ENCODE measurements at regions of chr15 and their contacts with region 1.

Region 1: DNA sequence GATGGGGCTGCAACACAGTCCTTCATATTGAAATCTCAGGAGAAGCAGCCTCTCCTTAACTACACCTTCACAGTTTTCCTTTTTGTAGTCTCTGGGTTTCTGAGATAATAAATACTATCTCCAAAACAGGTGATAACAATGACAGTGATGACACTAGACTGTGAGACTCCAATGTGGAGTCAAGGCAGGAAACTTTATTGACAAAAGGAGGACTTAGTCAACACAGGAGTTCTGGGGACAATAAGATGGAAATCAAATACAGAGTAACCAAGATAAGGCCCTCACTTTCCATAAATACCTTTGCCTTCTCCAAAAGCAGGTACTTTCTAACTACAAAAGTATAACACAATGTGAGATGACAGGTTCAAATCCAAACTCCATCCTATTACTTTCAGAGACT is 15.6 kb upstream of the TPM1 start:
- H3K4me3 ChIP-seq: no peak overlapping the region
- H3K27ac ChIP-seq: no peak overlapping the region
- H3K4me1 ChIP-seq: no peaks in the 10 kb centered on the region
- CTCF ChIP-seq: no peak

Region 2: DNA sequence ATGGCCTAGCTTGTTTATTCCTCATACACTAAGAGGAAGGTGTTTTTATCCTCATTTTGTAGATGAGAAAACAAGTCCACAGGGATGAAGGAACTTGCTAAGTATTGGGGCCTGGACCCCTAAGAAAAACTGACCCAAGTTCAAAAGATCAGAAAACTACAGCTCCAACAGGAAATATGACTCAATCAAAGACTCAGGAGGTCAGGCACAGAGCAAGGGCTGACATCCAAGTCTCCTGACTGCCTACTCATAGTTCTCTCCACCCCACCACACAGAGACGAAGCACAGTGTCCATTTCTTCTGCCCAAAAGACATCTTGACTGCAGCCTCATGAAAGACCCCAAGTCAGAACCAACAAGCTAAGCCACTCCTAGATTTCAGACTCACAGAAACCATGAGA is 11.3 kb before region 1 on chr15:
- CTCF ChIA-PET with region 1: no interaction called
- POLR2A ChIA-PET with region 1: no interaction called
- H3K4me3 ChIP-seq: no peak overlapping the region
- H3K27ac ChIP-seq: no peak overlapping the region
- H3K4me1 ChIP-seq: peaks cover 14% of the 10 kb centered on the region
- CTCF ChIP-seq: no peak

Region 3: DNA sequence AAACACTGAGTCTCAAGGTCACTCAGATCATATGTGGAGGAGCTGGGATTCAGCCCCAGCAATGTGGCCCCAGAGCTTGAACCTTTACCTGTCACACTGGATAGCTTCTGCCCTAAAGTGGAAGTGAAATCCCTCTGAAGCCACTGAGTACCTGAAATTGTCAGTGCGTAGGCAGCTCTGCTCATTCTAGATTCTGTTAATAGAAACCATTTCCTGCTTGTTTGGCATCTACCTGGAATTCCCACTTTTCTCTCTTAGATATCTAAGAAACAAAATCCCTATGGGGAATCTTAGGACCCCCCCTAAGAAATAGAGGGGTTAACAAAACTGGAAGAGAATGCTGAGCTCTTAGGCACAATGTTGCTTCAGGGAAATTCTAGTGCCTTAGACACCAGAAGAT is 600.0 kb after region 1 on chr15:
- CTCF ChIA-PET with region 1: no interaction called
- POLR2A ChIA-PET with region 1: interaction called, 11 read pairs
- H3K4me3 ChIP-seq: no peak overlapping the region
- H3K27ac ChIP-seq: no peak overlapping the region
- H3K4me1 ChIP-seq: no peaks in the 10 kb centered on the region
- CTCF ChIP-seq: no peak

Measured in HEK293 (cell line).